H1 (cell line): ENCODE measurements at regions of chr9 and their contacts with region 1.

Region 1: GRCh38 chr9:132800038-132800648 is 77.9 kb downstream of the AK8 start:
- DNase-seq: peak; percentile 80 to 87
- H3K4me3 ChIP-seq: no peak overlapping the region
- H3K27ac ChIP-seq: no peak overlapping the region
- H3K4me1 ChIP-seq: peaks cover 0 to 4% (median 0%) of the 10 kb centered on the region in 4 experiments; a peak in 1 of 7 replicates
- H3K27me3 ChIP-seq: peaks cover 0 to 36% (median 26%) of the 10 kb centered on the region in 4 experiments; a peak in 6 of 7 replicates
- CTCF ChIP-seq: peak; percentile 75 to 98 (median 93)
- EP300 ChIP-seq: 0 out of 3 replicates have a peak, but pooled peaks of 1 of the 2 experiments have one; percentile 42
- POLR2A ChIP-seq: no peak
- RAD21 ChIP-seq: peak; percentile 97 to 98

Region 2: GRCh38 chr9:132609829-132610228 is 190.3 kb before region 1 on chr9:
- CTCF ChIA-PET with region 1: no interaction called
- POLR2A ChIA-PET with region 1: no interaction called
- DNase-seq: no peak
- H3K4me3 ChIP-seq: no peak overlapping the region
- H3K27ac ChIP-seq: no peak overlapping the region
- H3K4me1 ChIP-seq: no peaks in the 10 kb centered on the region
- H3K27me3 ChIP-seq: no peaks in the 10 kb centered on the region
- CTCF ChIP-seq: no peak
- EP300 ChIP-seq: no peak
- POLR2A ChIP-seq: no peak
- RAD21 ChIP-seq: no peak

Region 3: DNA sequence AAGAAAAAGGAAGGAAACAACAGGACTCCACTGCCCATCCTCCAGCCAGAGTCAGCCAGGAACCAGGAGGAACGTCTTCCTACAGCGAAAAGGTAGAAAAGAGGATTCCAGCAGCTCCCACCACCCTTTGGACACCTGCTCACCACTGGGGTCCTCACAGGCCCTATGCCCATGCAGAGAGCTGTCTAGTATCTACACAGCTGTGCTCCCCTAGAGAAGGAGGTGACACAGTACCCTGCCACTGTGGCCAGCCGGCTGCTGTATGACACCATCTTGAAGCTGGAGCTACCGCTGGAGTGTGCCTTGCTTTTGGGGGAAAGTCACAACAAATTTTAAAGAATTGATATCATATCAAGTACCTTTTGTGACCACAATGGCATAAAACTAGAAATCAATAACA is 37.2 kb before region 1 on chr9:
- CTCF ChIA-PET with region 1: interaction called, 12 read pairs
- POLR2A ChIA-PET with region 1: no interaction called
- DNase-seq: no peak
- H3K4me3 ChIP-seq: no peak overlapping the region
- H3K27ac ChIP-seq: no peak overlapping the region
- H3K4me1 ChIP-seq: no peaks in the 10 kb centered on the region
- H3K27me3 ChIP-seq: no peaks in the 10 kb centered on the region; a peak in 1 of 7 replicates
- CTCF ChIP-seq: no peak
- EP300 ChIP-seq: no peak
- POLR2A ChIP-seq: no peak
- RAD21 ChIP-seq: no peak